Heart left ventricle (tissue), 16 donors: ENCODE measurements at regions of chr18 and their contacts with region 1.

Region 1: GRCh38 chr18:32261003-32261402 is 71.2 kb downstream of the MEP1B start:
- DNase-seq: no peak
- ATAC-seq: no peak
- H3K4me3 ChIP-seq: no peak overlapping the region
- H3K27ac ChIP-seq: no peak overlapping the region
- H3K4me1 ChIP-seq: peaks cover 0 to 4% (median 0%) of the 10 kb centered on the region in 12 donors
- H3K27me3 ChIP-seq: no peaks in the 10 kb centered on the region
- CTCF ChIP-seq: peak in 2 of 12 donors; percentile 14 to 18
- POLR2A ChIP-seq: no peak

Region 2: GRCh38 chr18:32167975-32168730 is 92.8 kb before region 1 on chr18:
- intact Hi-C with region 1: loop called in 3 of 10 experiments (anchors 5 to 10 kb)
- DNase-seq: no peak
- ATAC-seq: no peak
- H3K4me3 ChIP-seq: no peak overlapping the region
- H3K27ac ChIP-seq: no peak overlapping the region
- H3K4me1 ChIP-seq: no peaks in the 10 kb centered on the region
- H3K27me3 ChIP-seq: no peaks in the 10 kb centered on the region
- CTCF ChIP-seq: no peak
- POLR2A ChIP-seq: no peak

Region 3: GRCh38 chr18:32175265-32175664 is 85.7 kb before region 1 on chr18:
- intact Hi-C with region 1: loop called in 1 of 10 experiments (anchors 10 kb)
- DNase-seq: peak in 4 of 5 donors; percentile 40 to 80 (median 72)
- ATAC-seq: peak; percentile 34 to 93 (median 70)
- H3K4me3 ChIP-seq: no peak overlapping the region
- H3K27ac ChIP-seq: peak overlapping the region in 1 of 12 donors; percentile 21
- H3K4me1 ChIP-seq: peaks cover 0 to 11% (median 4%) of the 10 kb centered on the region in 12 donors
- H3K27me3 ChIP-seq: no peaks in the 10 kb centered on the region
- CTCF ChIP-seq: no peak
- POLR2A ChIP-seq: no peak

Region 4: DNA sequence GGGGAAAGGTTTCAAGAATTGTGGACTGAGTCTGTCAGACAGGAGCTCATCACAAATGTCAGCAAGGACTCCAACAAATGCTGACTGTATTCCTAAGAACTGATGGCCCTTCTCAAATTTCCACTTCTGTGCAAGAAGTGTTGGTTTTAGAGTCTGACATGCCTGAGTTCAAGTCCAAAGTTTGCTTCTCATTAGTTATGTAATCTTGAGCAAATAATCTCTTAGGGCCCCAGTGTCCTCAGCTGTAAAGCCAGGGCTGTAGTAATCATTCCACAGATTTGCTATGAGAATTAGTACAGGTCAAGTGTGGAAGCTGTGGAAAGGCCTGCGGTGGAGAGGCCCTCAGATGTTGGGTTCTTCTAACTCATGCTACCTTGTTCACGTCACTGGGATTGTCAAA is 47.3 kb before region 1 on chr18:
- intact Hi-C with region 1: loop called in 1 of 10 experiments (anchors 10 kb)
- DNase-seq: no peak
- ATAC-seq: no peak
- H3K4me3 ChIP-seq: no peak overlapping the region
- H3K27ac ChIP-seq: no peak overlapping the region
- H3K4me1 ChIP-seq: no peaks in the 10 kb centered on the region
- H3K27me3 ChIP-seq: no peaks in the 10 kb centered on the region
- CTCF ChIP-seq: no peak
- POLR2A ChIP-seq: no peak